Mucosa of descending colon (tissue), 3 donors: ENCODE measurements at regions of chr14 and their contacts with region 1.

Region 1: GRCh38 chr14:73467377-73467776 is 9.0 kb upstream of the NUMB start:
- DNase-seq: no peak
- ATAC-seq: no peak
- H3K4me3 ChIP-seq: no peak overlapping the region
- H3K4me1 ChIP-seq: peaks cover 35% of the 10 kb centered on the region
- CTCF ChIP-seq: no peak

Region 2: GRCh38 chr14:73290279-73290678 is 177.1 kb before region 1 on chr14:
- intact Hi-C with region 1: loop called (anchors 5 kb)
- DNase-seq: no peak
- ATAC-seq: no peak
- H3K4me3 ChIP-seq: no peak overlapping the region
- H3K4me1 ChIP-seq: peaks cover under 1% of the 10 kb centered on the region
- CTCF ChIP-seq: no peak

Region 3: GRCh38 chr14:73627151-73627558 is 159.8 kb after region 1 on chr14:
- intact Hi-C with region 1: no loop called
- DNase-seq: no peak
- ATAC-seq: no peak
- H3K4me3 ChIP-seq: no peak overlapping the region
- H3K4me1 ChIP-seq: no peaks in the 10 kb centered on the region
- CTCF ChIP-seq: no peak